HepG2 (cell line): ENCODE measurements at regions of chr5 and their contacts with region 1.

Region 1: GRCh38 chr5:139633295-139634027 is 14.7 kb upstream of the CXXC5 start:
- DNase-seq: peak; percentile 76
- ATAC-seq: peak; percentile 45
- H3K4me3 ChIP-seq: no peak overlapping the region
- H3K27ac ChIP-seq: no peak overlapping the region
- H3K4me1 ChIP-seq: peaks cover 52% of the 10 kb centered on the region
- H3K27me3 ChIP-seq: no peaks in the 10 kb centered on the region
- CTCF ChIP-seq: peak; percentile 97
- EP300 ChIP-seq: no peak
- POLR2A ChIP-seq: peak in 1 of 2 experiments; percentile 33; a peak in 1 of 4 replicates
- RAD21 ChIP-seq: peak; percentile 93

Region 2: GRCh38 chr5:138354926-138355378 is 1278.5 kb before region 1 on chr5:
- CTCF ChIA-PET with region 1: no interaction called
- POLR2A ChIA-PET with region 1: no interaction called
- in situ Hi-C with region 1: no loop called
- intact Hi-C with region 1: no loop called
- DNase-seq: peak; percentile 67
- ATAC-seq: peak; percentile 67
- H3K4me3 ChIP-seq: peak overlapping the region; percentile 93 to 98 (median 97); a peak in 5 of 6 replicates
- H3K27ac ChIP-seq: no peak overlapping the region
- H3K4me1 ChIP-seq: peaks cover 20% of the 10 kb centered on the region
- H3K27me3 ChIP-seq: no peaks in the 10 kb centered on the region; a peak in 1 of 5 replicates
- CTCF ChIP-seq: peak; percentile 20
- EP300 ChIP-seq: no peak
- POLR2A ChIP-seq: no peak
- RAD21 ChIP-seq: no peak

Region 3: GRCh38 chr5:139593716-139594319 is 39.6 kb before region 1 on chr5:
- CTCF ChIA-PET with region 1: no interaction called
- POLR2A ChIA-PET with region 1: no interaction called
- in situ Hi-C with region 1: no loop called
- intact Hi-C with region 1: no loop called
- DNase-seq: no peak
- ATAC-seq: no peak
- H3K4me3 ChIP-seq: no peak overlapping the region
- H3K27ac ChIP-seq: no peak overlapping the region
- H3K4me1 ChIP-seq: no peaks in the 10 kb centered on the region
- H3K27me3 ChIP-seq: no peaks in the 10 kb centered on the region
- CTCF ChIP-seq: no peak
- EP300 ChIP-seq: no peak
- POLR2A ChIP-seq: no peak
- RAD21 ChIP-seq: no peak

Region 4: DNA sequence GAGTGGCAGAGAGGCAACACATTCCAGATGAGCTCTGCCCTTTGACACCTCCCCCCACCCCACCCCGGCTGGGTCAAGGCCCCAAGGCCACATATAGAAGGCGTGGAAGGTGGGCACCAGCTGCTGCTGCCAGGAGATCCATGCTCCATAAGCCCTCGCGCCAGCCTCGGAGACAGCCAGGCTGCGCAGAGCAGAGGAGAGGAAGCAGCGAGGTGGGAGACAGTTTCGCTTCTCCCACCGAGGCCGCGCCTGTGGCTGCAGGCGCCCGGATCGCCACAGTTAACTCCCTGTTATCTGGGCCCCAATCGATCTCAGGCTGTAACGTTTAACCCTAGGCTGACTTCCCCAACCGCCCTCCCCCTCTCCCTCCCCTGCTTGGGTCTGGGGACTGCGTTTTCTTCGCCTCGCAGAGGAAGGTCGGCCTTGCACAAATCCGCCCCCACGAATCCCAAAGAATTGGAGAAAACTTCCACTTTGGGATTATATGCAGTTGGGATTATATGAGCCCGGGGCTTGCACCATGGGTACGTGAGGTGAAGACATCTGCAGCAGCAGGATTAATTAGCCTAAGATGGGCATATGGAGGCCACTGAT is 13.5 kb after region 1 on chr5:
- CTCF ChIA-PET with region 1: interaction called, 10 read pairs
- POLR2A ChIA-PET with region 1: interaction called, 95 read pairs
- in situ Hi-C with region 1: no loop called
- intact Hi-C with region 1: loop called (anchors 1 kb)
- DNase-seq: no peak
- ATAC-seq: peak; percentile 2; the same call in 2 of the 3 replicates
- H3K4me3 ChIP-seq: peak overlapping the region; percentile 74 to 95 (median 91)
- H3K27ac ChIP-seq: no peak overlapping the region
- H3K4me1 ChIP-seq: peaks cover 67% of the 10 kb centered on the region
- H3K27me3 ChIP-seq: no peaks in the 10 kb centered on the region; a peak in 1 of 5 replicates
- CTCF ChIP-seq: no peak
- EP300 ChIP-seq: no peak
- POLR2A ChIP-seq: no peak
- RAD21 ChIP-seq: no peak

Region 5: DNA sequence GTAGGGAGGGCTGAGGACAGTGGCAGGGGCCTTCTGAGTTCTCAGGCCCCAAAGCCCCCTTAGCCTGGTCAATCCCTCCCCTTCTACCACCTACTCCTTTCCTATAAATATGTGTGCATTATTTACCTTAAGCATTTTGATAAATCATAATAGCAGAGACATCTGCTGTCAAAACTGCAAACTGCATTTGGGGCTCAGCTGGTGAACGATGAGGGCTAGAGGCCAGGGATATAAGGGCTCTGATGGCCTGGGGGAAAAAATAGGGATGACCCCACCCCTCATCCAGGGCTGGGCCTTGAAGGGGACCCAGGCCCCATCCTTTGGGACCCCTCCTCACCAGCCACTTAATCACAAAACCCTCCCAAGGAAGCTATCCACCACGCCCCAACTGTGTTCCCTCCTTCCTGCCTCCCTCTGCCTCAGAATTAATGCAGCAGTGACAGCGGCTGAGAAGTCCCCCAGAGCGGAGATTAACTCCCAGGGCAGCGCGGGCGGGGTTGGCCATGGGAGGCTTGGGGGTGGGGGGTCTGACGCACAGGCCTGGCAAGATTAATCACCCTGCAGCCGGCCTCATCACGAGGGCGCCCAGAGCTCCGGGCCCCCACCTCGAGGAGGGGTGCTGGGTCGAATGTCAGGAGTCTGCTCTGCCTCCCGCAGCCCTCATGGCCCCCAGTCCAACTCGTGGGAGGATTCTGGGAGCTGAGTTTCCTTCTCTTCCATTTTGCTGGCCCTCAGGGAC is 56.8 kb after region 1 on chr5:
- CTCF ChIA-PET with region 1: interaction called, 16 read pairs
- POLR2A ChIA-PET with region 1: interaction called, 4 read pairs
- in situ Hi-C with region 1: no loop called
- intact Hi-C with region 1: loop called (anchors 1 kb)
- DNase-seq: no peak
- ATAC-seq: peak; percentile 10
- H3K4me3 ChIP-seq: peak overlapping the region in 1 of 3 experiments; percentile 46; a peak in 1 of 6 replicates
- H3K27ac ChIP-seq: no peak overlapping the region
- H3K4me1 ChIP-seq: peaks cover 82% of the 10 kb centered on the region
- H3K27me3 ChIP-seq: no peaks in the 10 kb centered on the region
- CTCF ChIP-seq: peak; percentile 63
- EP300 ChIP-seq: no peak
- POLR2A ChIP-seq: no peak
- RAD21 ChIP-seq: no peak

Region 6: GRCh38 chr5:139711067-139711905 is 77.8 kb after region 1 on chr5:
- CTCF ChIA-PET with region 1: no interaction called
- POLR2A ChIA-PET with region 1: interaction called, 10 read pairs
- in situ Hi-C with region 1: loop called (anchors 5 kb)
- intact Hi-C with region 1: loop called (anchors 1 kb)
- DNase-seq: no peak
- ATAC-seq: peak; percentile 7
- H3K4me3 ChIP-seq: peak overlapping the region; percentile 52 to 74 (median 56); a peak in 5 of 6 replicates
- H3K27ac ChIP-seq: peak overlapping the region; percentile 46
- H3K4me1 ChIP-seq: peaks cover 58% of the 10 kb centered on the region
- H3K27me3 ChIP-seq: no peaks in the 10 kb centered on the region
- CTCF ChIP-seq: peak; percentile 47
- EP300 ChIP-seq: no peak
- POLR2A ChIP-seq: no peak
- RAD21 ChIP-seq: no peak

Region 7: DNA sequence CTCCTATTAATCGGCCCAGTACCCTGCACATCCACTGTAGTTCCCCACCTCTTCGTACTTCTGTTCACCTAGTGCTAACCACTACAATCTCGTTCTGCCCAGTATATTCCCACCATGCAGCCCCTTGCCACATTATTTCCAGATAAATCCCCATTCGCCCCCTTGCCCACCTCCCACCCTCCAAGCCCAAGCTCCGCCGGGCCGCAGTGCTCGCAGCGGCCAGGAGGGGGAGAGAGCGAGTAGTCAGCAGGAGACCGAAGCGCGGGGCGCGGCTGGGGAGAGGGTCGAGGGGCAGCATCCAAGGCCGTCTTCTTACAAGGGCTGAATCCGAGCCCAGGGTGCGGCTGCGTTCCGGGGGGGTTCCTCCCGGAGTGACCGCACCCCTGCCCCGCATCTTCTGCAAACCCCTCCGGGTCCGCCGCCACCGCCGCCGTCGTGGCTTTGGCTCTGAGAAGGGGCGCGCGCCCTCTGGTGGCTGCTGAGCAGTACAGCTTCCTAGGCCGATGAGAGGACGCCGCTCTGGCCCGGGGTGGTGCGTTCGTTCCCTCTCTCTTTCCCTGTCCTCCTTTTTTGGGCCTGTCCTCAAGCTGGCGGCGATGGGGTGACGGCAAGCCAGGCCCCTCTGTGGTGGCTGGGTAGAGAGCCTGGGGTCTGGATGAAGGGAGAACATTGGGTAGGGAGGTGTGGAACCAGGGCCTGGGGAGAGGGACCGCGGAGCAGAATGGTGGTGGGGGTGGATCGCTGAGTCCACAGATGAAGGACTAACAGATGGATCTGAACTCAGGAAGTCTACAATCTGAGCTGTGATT is 132.2 kb after region 1 on chr5:
- CTCF ChIA-PET with region 1: interaction called, 54 read pairs
- POLR2A ChIA-PET with region 1: interaction called, 5 read pairs
- in situ Hi-C with region 1: no loop called
- intact Hi-C with region 1: loop called (anchors 1 kb)
- DNase-seq: peak; percentile 55
- ATAC-seq: peak; percentile 83
- H3K4me3 ChIP-seq: peak overlapping the region; percentile 62 to 78 (median 69)
- H3K27ac ChIP-seq: no peak overlapping the region
- H3K4me1 ChIP-seq: peaks cover 78% of the 10 kb centered on the region
- H3K27me3 ChIP-seq: peaks cover 0 to 13% of the 10 kb centered on the region in 2 experiments; a peak in 4 of 5 replicates
- CTCF ChIP-seq: peak; percentile 97
- EP300 ChIP-seq: no peak
- POLR2A ChIP-seq: no peak
- RAD21 ChIP-seq: peak; percentile 98

Region 8: GRCh38 chr5:139872052-139872766 is 238.7 kb after region 1 on chr5:
- CTCF ChIA-PET with region 1: no interaction called
- POLR2A ChIA-PET with region 1: no interaction called
- in situ Hi-C with region 1: no loop called
- intact Hi-C with region 1: no loop called
- DNase-seq: no peak
- ATAC-seq: peak; percentile 60
- H3K4me3 ChIP-seq: no peak overlapping the region
- H3K27ac ChIP-seq: no peak overlapping the region
- H3K4me1 ChIP-seq: no peaks in the 10 kb centered on the region
- H3K27me3 ChIP-seq: peaks cover 5 to 43% of the 10 kb centered on the region in 2 experiments; a peak in 4 of 5 replicates
- CTCF ChIP-seq: peak; percentile 18; the same call in 1 of the 2 replicates
- EP300 ChIP-seq: no peak
- POLR2A ChIP-seq: no peak
- RAD21 ChIP-seq: no peak

Region 9: GRCh38 chr5:139968547-139969261 is 335.2 kb after region 1 on chr5:
- CTCF ChIA-PET with region 1: no interaction called
- POLR2A ChIA-PET with region 1: no interaction called
- in situ Hi-C with region 1: loop called (anchors 25 kb)
- intact Hi-C with region 1: no loop called
- DNase-seq: peak; percentile 62
- ATAC-seq: peak; percentile 99
- H3K4me3 ChIP-seq: peak overlapping the region in 1 of 3 experiments; percentile 33; a peak in 1 of 6 replicates
- H3K27ac ChIP-seq: no peak overlapping the region
- H3K4me1 ChIP-seq: no peaks in the 10 kb centered on the region
- H3K27me3 ChIP-seq: peaks cover 2 to 17% of the 10 kb centered on the region in 2 experiments; a peak in 3 of 5 replicates
- CTCF ChIP-seq: peak; percentile 100
- EP300 ChIP-seq: 0 out of 4 replicates have a peak, but pooled peaks of 1 of the 2 experiments have one; percentile 5
- POLR2A ChIP-seq: no peak
- RAD21 ChIP-seq: peak; percentile 97

Region 10: GRCh38 chr5:140042643-140043500 is 409.4 kb after region 1 on chr5 and contains the start of gene NRG2:
- CTCF ChIA-PET with region 1: no interaction called
- POLR2A ChIA-PET with region 1: no interaction called
- in situ Hi-C with region 1: no loop called
- intact Hi-C with region 1: no loop called
- DNase-seq: peak; percentile 49
- ATAC-seq: peak; percentile 94
- H3K4me3 ChIP-seq: peak within 1 kb of the TSS; percentile 55 to 70 (median 57); a peak in 5 of 6 replicates
- H3K27ac ChIP-seq: no peak within 1 kb of the TSS
- H3K4me1 ChIP-seq: peaks cover 6% of the 10 kb centered on the region; the same call in 1 of the 2 replicates
- H3K27me3 ChIP-seq: peaks cover 10 to 53% of the 10 kb centered on the region in 2 experiments; a peak in 4 of 5 replicates
- CTCF ChIP-seq: peak; percentile 52
- EP300 ChIP-seq: no peak
- POLR2A ChIP-seq: no peak
- RAD21 ChIP-seq: no peak
- total RNA-seq, gene NRG2: not detected in 2 replicates